HEK293 (cell line): ENCODE measurements at regions of chr1 and their contacts with region 1.

Region 1: DNA sequence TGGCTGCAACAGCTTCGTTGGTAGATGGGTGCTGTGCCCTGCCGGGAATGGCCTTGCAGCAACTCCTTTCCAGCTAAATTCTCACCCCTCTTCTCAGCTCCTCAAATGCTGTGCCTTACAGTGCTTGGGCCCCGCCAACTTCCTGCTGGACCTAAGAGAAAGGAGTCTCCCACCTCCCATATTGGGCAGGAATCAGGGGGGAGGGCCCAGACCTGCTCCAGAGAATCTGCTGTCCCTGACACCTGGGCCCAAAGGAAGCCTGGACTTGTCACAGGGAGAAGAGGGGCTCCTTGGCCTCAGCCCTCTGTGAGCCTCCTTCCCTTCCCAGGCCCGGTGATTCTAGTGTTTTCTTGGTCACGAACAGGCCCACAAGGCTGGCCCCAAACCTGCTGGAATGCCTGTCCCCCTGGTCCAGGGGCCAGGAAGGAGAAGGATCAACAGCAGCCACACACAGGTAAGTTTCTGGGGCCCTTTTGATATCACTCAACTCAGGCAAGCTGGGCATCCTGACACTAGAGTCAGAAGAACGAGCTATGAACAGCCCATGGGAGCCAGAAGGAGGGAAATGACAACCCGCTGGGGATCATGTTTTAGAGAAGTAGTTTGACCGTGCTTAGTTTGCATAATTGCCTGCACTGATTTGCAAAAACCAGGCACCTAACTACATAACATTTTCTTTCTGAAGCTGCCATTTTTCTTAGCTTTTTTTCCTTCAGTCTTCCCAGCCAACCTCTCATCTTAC is 86.2 kb downstream of the CD247 start:
- H3K4me3 ChIP-seq: no peak overlapping the region
- H3K27ac ChIP-seq: no peak overlapping the region
- H3K4me1 ChIP-seq: no peaks in the 10 kb centered on the region
- CTCF ChIP-seq: no peak

Region 2: DNA sequence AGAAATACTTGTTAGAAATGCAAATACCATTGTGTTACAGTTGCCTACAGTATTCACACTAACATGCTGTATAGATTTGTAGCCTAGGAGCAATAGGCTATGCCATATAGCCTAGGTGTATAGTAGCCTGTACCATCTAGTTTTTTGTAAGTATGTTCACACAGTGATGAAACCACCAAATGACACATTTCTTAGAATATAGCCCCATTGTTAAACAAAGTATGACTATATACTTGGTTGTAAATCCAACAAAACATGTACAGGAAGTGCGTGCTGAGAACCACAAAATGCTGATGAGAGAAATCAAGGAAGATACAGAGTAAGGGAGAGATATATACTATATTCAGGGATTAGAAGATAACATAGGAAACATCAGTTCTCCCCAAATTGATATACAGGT is 119.2 kb before region 1 on chr1:
- CTCF ChIA-PET with region 1: no interaction called
- POLR2A ChIA-PET with region 1: no interaction called
- H3K4me3 ChIP-seq: no peak overlapping the region
- H3K27ac ChIP-seq: no peak overlapping the region
- H3K4me1 ChIP-seq: peaks cover 3% of the 10 kb centered on the region
- CTCF ChIP-seq: no peak

Region 3: GRCh38 chr1:167442124-167442848 is 10.2 kb after region 1 on chr1:
- CTCF ChIA-PET with region 1: interaction called, 11 read pairs
- POLR2A ChIA-PET with region 1: no interaction called
- H3K4me3 ChIP-seq: no peak overlapping the region
- H3K27ac ChIP-seq: no peak overlapping the region
- H3K4me1 ChIP-seq: no peaks in the 10 kb centered on the region
- CTCF ChIP-seq: peak; percentile 85

Region 4: GRCh38 chr1:167584581-167584980 is 152.5 kb after region 1 on chr1:
- CTCF ChIA-PET with region 1: no interaction called
- POLR2A ChIA-PET with region 1: no interaction called
- H3K4me3 ChIP-seq: no peak overlapping the region
- H3K27ac ChIP-seq: no peak overlapping the region
- H3K4me1 ChIP-seq: no peaks in the 10 kb centered on the region
- CTCF ChIP-seq: no peak

Region 5: DNA sequence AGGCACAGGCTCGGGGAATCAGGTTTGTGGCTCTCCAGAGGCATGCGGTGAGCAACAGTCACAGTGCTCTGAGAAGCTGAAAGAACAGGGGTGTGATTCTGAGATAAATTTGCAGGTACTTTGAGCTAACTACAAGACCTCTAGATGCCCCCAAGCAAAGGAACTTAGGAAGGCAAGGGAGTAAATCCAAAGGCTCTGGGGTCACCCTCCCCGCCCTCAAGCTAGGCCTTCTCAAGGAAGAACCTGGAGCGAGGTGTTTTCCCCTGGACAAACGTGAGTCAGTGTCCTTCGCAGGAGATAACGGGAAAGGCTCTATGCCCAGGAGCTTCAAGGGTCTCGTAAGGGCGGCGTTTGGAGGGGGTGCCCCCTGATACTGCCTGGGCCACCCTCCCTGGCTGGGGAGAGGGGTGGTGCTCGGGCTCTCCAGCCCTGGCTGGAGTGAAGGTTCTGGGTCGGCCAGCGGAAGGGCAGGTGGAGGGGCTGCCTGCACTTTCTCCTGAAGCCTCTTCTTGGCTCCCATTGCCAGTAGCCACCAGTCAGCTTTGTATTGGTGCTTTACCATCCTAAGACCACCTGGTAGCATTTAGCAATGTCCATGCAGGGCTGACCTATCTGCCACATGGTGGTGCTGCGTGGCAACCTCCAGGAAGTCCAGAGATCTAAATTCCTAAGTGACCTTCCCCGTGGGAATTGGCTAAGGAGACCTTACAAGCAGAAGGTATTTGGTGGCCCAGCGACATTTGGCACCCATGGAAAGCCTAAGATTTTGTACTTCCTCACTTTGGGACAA is 660.7 kb after region 1 on chr1:
- CTCF ChIA-PET with region 1: no interaction called
- POLR2A ChIA-PET with region 1: no interaction called
- H3K4me3 ChIP-seq: no peak overlapping the region
- H3K27ac ChIP-seq: no peak overlapping the region
- H3K4me1 ChIP-seq: no peaks in the 10 kb centered on the region
- CTCF ChIP-seq: no peak